ENCODE measurements at regions of chr11 and their contacts with region 1.

Region 1: GRCh38 chr11:84261707-84262106 is 975.5 kb upstream of the CCDC90B start:
- DNase-seq: peak in 1 of 10 donors; percentile 52
- H3K4me3 ChIP-seq: no peak overlapping the region
- H3K27ac ChIP-seq: peak overlapping the region; percentile 8 to 100 (median 97)
- H3K27me3 ChIP-seq: no peaks in the 10 kb centered on the region
- CTCF ChIP-seq: peak in 49 of 56 donors; percentile 11 to 68 (median 40)

Region 2: DNA sequence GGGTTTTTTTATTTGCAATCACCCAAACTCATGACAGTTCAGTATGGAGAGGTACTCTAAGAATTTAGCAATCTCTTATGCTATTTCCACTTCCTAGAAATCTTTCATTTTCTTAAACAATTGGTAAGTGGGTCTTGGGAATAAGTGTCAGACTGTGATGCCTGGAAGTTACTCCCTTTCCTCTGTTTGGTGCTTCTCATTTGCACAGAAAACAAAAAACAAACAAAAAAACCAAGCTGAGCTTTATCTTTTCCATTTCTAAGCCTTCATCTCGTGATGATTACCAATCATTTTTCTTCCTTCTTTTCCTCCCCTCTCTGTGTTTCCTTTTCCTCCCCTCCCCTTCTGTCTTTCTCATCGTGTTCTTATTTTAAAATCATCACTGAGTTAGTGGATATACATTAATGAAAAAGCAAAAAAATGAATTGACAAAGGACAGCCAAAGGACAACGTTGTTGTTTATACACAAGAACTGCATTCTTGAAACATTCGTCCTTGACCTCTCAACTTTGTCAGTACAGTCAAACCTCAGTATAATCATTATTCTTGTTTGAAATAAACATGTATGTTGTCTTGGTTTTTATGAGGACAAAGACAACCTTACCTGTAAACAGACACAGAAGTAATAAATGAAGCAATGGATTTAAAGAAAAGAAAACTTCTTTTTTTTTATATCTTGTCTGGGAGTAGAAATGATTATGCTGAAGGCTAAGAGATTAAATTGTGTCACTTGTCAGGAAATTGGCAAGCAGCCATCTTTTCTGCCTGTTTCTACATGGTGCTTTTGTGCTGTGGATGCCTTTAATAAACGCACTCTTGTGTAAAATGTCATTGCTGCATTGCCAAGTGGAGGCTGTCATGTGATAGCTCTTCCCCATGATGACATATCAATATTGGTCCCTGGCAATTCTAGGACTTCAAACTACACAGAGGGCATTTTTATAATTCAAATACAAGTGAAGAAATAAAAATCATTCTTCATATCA is 172.3 kb before region 1 on chr11:
- intact Hi-C with region 1: loop called in 1 of 2 experiments (anchors 5 kb)
- DNase-seq: peak in 4 of 10 donors; percentile 28 to 74 (median 50)
- H3K4me3 ChIP-seq: peak overlapping the region in 4 of 59 donors; percentile 9 to 19 (median 16)
- H3K27ac ChIP-seq: peak overlapping the region; percentile 5 to 96 (median 85)
- H3K27me3 ChIP-seq: no peaks in the 10 kb centered on the region
- CTCF ChIP-seq: peak in 2 of 56 donors; percentile 23 to 28

Region 3: DNA sequence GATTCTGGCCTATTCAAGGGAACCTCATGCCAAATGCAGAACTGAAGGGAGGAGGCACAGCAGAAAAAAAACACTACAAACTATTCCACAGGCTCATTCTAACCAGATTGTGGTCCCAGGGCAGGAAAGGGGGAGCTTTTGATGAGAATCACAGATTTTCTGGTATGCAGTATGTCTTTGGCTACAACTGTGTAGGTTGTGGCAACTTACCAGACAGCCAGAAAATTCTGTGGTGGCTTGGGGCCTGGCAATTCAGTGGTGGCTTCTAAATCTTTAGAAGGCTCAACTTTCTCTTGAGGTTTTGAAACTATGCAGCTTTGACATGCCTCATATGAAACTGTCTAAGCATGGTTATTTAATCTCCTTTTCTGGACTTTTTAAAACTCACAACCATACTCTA is 124.8 kb before region 1 on chr11:
- intact Hi-C with region 1: loop called in 1 of 2 experiments (anchors 5 kb)
- DNase-seq: no peak
- H3K4me3 ChIP-seq: peak overlapping the region in 1 of 59 donors; percentile 1
- H3K27ac ChIP-seq: peak overlapping the region in 55 of 59 donors; percentile 3 to 96 (median 89)
- H3K27me3 ChIP-seq: no peaks in the 10 kb centered on the region
- CTCF ChIP-seq: no peak

Region 4: GRCh38 chr11:84316866-84317555 is 55.3 kb after region 1 on chr11:
- intact Hi-C with region 1: loop called in 1 of 2 experiments (anchors 5 kb)
- DNase-seq: peak; percentile 8 to 90 (median 76)
- H3K4me3 ChIP-seq: peak overlapping the region; percentile 41 to 85 (median 69)
- H3K27ac ChIP-seq: peak overlapping the region; percentile 26 to 95 (median 89)
- H3K27me3 ChIP-seq: no peaks in the 10 kb centered on the region
- CTCF ChIP-seq: peak in 8 of 56 donors; percentile 13 to 38 (median 18)

Region 5: DNA sequence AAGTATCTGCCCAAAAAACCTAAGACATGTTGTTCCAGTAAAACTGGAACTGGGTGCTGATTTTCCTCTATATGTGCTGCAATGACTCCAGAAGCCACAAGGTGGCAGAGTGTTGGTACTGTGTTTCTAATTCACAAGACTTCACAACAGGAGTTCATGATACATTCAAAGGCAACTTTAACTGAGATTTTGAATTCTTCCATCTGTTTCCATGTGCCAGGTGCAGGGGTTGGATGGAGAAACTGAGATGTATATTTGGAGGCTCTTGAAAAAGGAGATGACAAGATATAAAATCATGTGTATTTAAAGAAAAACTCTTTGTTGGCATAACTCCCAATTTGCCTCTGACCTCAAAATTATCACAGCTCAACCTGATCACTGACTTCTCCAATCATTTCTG is 123.0 kb after region 1 on chr11:
- intact Hi-C with region 1: loop called in 1 of 2 experiments (anchors 10 kb)
- DNase-seq: peak in 7 of 10 donors; percentile 38 to 81 (median 55)
- H3K4me3 ChIP-seq: no peak overlapping the region
- H3K27ac ChIP-seq: peak overlapping the region in 37 of 59 donors; percentile 1 to 74 (median 42)
- H3K27me3 ChIP-seq: no peaks in the 10 kb centered on the region
- CTCF ChIP-seq: peak; percentile 30 to 96 (median 87)

Region 6: DNA sequence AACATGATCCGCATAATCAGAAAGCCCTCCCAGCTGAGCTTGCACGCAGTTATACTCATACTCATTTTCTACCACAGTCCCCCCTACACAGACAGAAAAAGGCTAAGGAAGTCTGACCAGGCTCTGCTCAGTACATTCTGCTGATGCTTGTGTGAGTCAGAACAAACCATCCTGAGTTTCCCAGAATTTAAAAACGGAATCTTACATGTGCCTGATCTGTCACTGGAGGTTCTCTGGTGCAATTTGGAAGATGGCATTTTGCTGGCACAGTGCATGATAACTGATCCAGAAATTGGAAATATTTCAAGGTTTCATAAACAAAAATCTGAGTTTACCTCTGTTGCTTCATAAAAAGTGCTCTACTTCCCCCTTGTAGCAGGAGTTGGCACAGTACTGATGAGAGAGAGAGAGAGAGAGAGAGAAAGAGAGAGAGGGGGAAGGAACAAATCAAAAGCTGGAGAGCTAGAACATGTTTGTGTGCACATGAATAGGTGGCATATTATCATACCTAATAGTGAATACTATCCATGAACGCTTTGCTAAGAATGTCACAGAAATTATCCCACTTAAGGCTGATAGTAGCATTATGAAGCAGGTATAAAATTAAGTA is 280.1 kb after region 1 on chr11:
- intact Hi-C with region 1: no loop called
- DNase-seq: peak in 2 of 10 donors; percentile 3 to 19
- H3K4me3 ChIP-seq: no peak overlapping the region
- H3K27ac ChIP-seq: peak overlapping the region in 38 of 59 donors; percentile 4 to 76 (median 40)
- H3K27me3 ChIP-seq: no peaks in the 10 kb centered on the region
- CTCF ChIP-seq: no peak

Measured in dorsolateral prefrontal cortex (tissue), 120 donors.